GM23248 (cell line): ENCODE measurements at regions of chr5 and their contacts with region 1.

Region 1: GRCh38 chr5:97224112-97224750 is 41.2 kb upstream of the RIOK2 start:
- DNase-seq: peak; percentile 50
- H3K4me3 ChIP-seq: peak overlapping the region; percentile 33; the same call in 1 of the 2 replicates
- H3K27ac ChIP-seq: peak overlapping the region; percentile 6; the same call in 1 of the 2 replicates
- H3K4me1 ChIP-seq: peaks cover 18% of the 10 kb centered on the region
- H3K27me3 ChIP-seq: no peaks in the 10 kb centered on the region

Region 2: GRCh38 chr5:96905864-96906263 is 318.4 kb before region 1 on chr5:
- in situ Hi-C with region 1: no loop called
- DNase-seq: no peak
- H3K4me3 ChIP-seq: no peak overlapping the region
- H3K27ac ChIP-seq: no peak overlapping the region
- H3K4me1 ChIP-seq: no peaks in the 10 kb centered on the region
- H3K27me3 ChIP-seq: no peaks in the 10 kb centered on the region

Region 3: DNA sequence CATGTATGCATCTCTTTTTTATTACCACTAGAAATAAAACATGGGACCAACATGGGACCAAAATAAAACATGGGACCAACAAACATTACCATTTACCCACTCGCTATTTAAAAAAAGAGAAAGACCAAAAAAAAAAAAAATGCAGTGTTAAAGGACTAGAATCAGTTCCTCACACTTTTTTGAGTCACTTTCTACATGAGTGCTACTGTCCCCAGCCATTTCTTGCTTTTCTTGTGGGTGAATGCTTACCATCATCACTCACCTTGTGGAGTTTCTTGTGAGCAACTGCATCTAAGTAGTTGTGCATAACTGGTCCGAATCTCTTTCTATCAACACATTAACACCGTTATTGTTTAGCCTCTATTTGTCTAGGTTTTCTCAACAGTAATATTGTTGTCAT is 452.4 kb after region 1 on chr5:
- in situ Hi-C with region 1: no loop called
- DNase-seq: no peak
- H3K4me3 ChIP-seq: no peak overlapping the region
- H3K27ac ChIP-seq: no peak overlapping the region
- H3K4me1 ChIP-seq: no peaks in the 10 kb centered on the region
- H3K27me3 ChIP-seq: no peaks in the 10 kb centered on the region

Region 4: GRCh38 chr5:98365126-98365525 is 1140.9 kb after region 1 on chr5:
- in situ Hi-C with region 1: loop called (anchors 25 kb)
- DNase-seq: no peak
- H3K4me3 ChIP-seq: no peak overlapping the region
- H3K27ac ChIP-seq: no peak overlapping the region
- H3K4me1 ChIP-seq: no peaks in the 10 kb centered on the region
- H3K27me3 ChIP-seq: no peaks in the 10 kb centered on the region

Region 5: GRCh38 chr5:98816582-98817222 is 1592.5 kb after region 1 on chr5:
- in situ Hi-C with region 1: loop called (anchors 25 kb)
- DNase-seq: no peak
- H3K4me3 ChIP-seq: no peak overlapping the region
- H3K27ac ChIP-seq: no peak overlapping the region
- H3K4me1 ChIP-seq: no peaks in the 10 kb centered on the region; the same call in 1 of the 2 replicates
- H3K27me3 ChIP-seq: no peaks in the 10 kb centered on the region